HAP-1 (cell line): ENCODE measurements at regions of chr3 and their contacts with region 1.

Region 1: GRCh38 chr3:44338010-44338827 is at the start of gene TCAIM:
- DNase-seq: peak; percentile 95 to 99
- H3K4me3 ChIP-seq: peak within 1 kb of the TSS; percentile 63
- H3K4me1 ChIP-seq: peaks cover 6% of the 10 kb centered on the region
- H3K27me3 ChIP-seq: no peaks in the 10 kb centered on the region

Region 2: DNA sequence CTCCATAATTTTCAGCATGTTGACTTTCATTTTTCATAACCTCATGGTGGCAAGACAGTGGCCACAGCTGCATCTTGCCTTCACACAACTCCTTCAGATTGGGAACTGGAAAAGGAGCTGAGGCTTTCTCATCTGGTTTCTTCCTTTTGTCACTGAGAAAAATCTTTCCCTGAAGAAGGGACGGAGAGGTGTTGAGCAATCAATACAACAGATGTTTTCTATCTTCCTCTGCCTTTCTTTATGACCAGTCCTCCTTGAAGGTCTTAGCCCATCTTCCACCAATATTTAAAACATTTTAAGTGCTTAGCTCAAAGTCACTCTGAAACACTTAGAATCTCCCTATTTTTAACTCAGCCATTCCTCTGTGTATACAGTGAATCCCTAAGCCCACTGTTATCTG is 258.4 kb after region 1 on chr3:
- in situ Hi-C with region 1: no loop called
- DNase-seq: no peak
- H3K4me3 ChIP-seq: no peak overlapping the region
- H3K4me1 ChIP-seq: no peaks in the 10 kb centered on the region
- H3K27me3 ChIP-seq: no peaks in the 10 kb centered on the region

Region 3: DNA sequence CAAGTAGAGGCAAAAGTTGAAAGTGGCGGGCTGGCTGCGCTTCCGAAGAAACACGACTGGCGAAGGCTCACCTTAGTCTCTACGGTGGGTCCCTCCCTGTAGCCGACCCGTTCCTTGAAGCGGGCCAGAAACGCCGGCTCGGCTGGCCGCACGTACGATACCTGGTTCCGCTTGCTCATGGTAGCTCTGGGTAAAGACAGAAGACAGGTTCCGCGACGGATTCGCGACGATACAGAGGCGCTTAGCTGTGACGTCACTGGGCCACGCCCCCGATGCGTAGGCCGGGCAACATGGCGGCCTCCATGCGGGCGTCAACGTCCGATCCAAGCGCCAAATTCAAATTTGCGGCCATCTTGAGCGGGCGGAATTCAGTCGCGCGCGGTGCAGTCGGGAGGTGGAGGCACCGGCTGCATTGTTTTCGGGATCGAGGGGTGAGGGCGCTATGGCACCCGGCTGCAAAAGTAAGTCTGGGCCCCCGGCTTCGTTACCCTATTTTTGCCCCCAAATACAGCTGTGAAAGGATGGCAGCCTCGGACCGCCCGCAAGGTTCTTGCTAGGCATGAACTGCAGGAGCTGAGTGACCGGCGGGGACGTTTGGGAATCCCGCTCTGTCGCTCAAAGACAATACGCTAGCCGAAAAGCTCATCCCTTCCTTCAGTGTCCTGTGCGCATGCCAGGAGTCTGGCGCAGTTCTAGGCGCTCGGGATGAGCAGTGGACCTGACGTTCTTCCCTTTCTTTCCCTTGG is 423.4 kb after region 1 on chr3 and contains the starts of genes KIAA1143 and KIF15:
- in situ Hi-C with region 1: loop called (anchors 25 kb)
- DNase-seq: peak; percentile 88 to 96
- H3K4me3 ChIP-seq: peak within 1 kb of the TSS; percentile 86
- H3K4me1 ChIP-seq: peaks cover 4% of the 10 kb centered on the region; the same call in 1 of the 2 replicates
- H3K27me3 ChIP-seq: no peaks in the 10 kb centered on the region